ENCODE measurements at regions of chr18 and their contacts with region 1.

Region 1: GRCh38 chr18:4106407-4107033 is 348.6 kb downstream of the DLGAP1 start:
- DNase-seq: peak; percentile 39 to 85 (median 72)
- ATAC-seq: peak in 1 of 2 donors; percentile 58
- H3K4me3 ChIP-seq: no peak overlapping the region
- H3K27ac ChIP-seq: no peak overlapping the region
- H3K4me1 ChIP-seq: no peaks in the 10 kb centered on the region
- H3K27me3 ChIP-seq: no peaks in the 10 kb centered on the region

Region 2: GRCh38 chr18:3889803-3890202 is 216.7 kb before region 1 on chr18:
- intact Hi-C with region 1: no loop called
- DNase-seq: peak in 1 of 3 donors; percentile 50
- ATAC-seq: no peak
- H3K4me3 ChIP-seq: no peak overlapping the region
- H3K27ac ChIP-seq: no peak overlapping the region
- H3K4me1 ChIP-seq: no peaks in the 10 kb centered on the region
- H3K27me3 ChIP-seq: no peaks in the 10 kb centered on the region

Region 3: GRCh38 chr18:3998698-3999333 is 107.7 kb before region 1 on chr18:
- intact Hi-C with region 1: no loop called
- DNase-seq: no peak
- ATAC-seq: no peak
- H3K4me3 ChIP-seq: no peak overlapping the region
- H3K27ac ChIP-seq: no peak overlapping the region
- H3K4me1 ChIP-seq: no peaks in the 10 kb centered on the region
- H3K27me3 ChIP-seq: no peaks in the 10 kb centered on the region

Region 4: GRCh38 chr18:4017480-4017879 is 89.0 kb before region 1 on chr18:
- intact Hi-C with region 1: no loop called
- DNase-seq: no peak
- ATAC-seq: no peak
- H3K4me3 ChIP-seq: no peak overlapping the region
- H3K27ac ChIP-seq: no peak overlapping the region
- H3K4me1 ChIP-seq: no peaks in the 10 kb centered on the region
- H3K27me3 ChIP-seq: no peaks in the 10 kb centered on the region

Region 5: GRCh38 chr18:4157352-4157751 is 50.8 kb after region 1 on chr18:
- intact Hi-C with region 1: loop called in 1 of 4 experiments (anchors 10 kb)
- DNase-seq: no peak
- ATAC-seq: no peak
- H3K4me3 ChIP-seq: no peak overlapping the region
- H3K27ac ChIP-seq: no peak overlapping the region
- H3K4me1 ChIP-seq: no peaks in the 10 kb centered on the region
- H3K27me3 ChIP-seq: peaks cover 2% of the 10 kb centered on the region

Region 6: DNA sequence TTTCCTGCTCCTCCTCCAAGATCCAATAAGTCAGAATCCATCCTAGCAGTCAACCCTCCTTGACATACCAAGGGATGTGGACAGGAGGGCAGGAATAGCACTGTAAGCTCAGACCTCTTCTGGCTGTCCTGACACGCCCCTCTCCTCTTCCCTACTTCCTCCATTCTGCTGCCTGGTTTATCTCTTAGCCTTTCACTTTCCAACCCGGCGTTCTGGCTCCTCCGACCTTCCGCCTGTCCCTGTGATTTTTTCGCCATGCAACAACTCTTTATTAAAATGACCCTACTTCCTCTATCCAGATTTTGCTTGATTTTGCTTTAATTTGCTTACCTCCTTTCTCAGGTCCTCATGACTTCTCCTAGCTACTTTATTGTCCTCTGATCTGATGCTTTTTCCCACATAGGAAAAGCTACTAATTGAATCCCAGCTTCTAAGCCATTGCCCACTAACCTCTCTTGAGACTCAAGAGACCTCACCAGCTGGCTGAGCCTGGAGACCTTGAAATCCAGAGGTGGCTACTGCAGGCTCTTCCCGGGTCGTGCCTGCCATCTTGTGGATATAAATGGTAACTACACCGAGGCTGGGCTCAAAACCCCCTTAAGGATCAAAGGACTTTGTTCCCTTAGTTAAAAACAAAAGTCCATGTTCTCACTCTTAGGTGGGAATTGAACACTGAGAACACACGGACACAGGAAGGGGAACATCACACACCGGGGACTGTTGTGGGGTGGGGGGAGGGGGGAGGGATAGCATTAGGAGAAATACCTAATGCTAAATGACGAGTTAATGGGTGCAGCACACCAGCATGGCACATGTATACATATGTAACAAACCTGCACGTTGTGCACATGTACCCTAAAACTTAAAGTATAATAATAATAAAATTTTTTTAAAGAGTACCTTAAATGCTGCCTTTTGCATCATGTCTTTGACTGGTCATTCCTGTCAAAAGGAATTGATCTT is 951.1 kb after region 1 on chr18:
- intact Hi-C with region 1: loop called in 1 of 4 experiments (anchors 5 kb)
- DNase-seq: peak; percentile 26 to 64 (median 58)
- ATAC-seq: peak; percentile 60 to 76
- H3K4me3 ChIP-seq: no peak overlapping the region
- H3K27ac ChIP-seq: no peak overlapping the region
- H3K4me1 ChIP-seq: peaks cover 1% of the 10 kb centered on the region
- H3K27me3 ChIP-seq: no peaks in the 10 kb centered on the region

Measured in right cardiac atrium (tissue), 5 donors.